PC-9 (cell line): ENCODE measurements at regions of chr16 and their contacts with region 1.

Region 1: GRCh38 chr16:73217654-73218053 is 169.7 kb upstream of the ZFHX3 start:
- DNase-seq: no peak
- H3K4me3 ChIP-seq: no peak overlapping the region
- H3K27ac ChIP-seq: no peak overlapping the region
- H3K4me1 ChIP-seq: no peaks in the 10 kb centered on the region
- H3K27me3 ChIP-seq: peaks cover 3% of the 10 kb centered on the region; the same call in 1 of the 2 replicates
- CTCF ChIP-seq: peak; percentile 55

Region 2: GRCh38 chr16:73891129-73891542 is 673.5 kb after region 1 on chr16:
- CTCF ChIA-PET with region 1: interaction called, 11 read pairs
- POLR2A ChIA-PET with region 1: no interaction called
- intact Hi-C with region 1: no loop called
- DNase-seq: no peak
- H3K4me3 ChIP-seq: no peak overlapping the region
- H3K27ac ChIP-seq: no peak overlapping the region
- H3K4me1 ChIP-seq: no peaks in the 10 kb centered on the region
- H3K27me3 ChIP-seq: peaks cover 60% of the 10 kb centered on the region
- CTCF ChIP-seq: no peak